Activated B cell treated with CpG ODN at 0.5 μM for 24 hours (primary cell): ENCODE measurements at regions of chr3 and their contacts with region 1.

Region 1: DNA sequence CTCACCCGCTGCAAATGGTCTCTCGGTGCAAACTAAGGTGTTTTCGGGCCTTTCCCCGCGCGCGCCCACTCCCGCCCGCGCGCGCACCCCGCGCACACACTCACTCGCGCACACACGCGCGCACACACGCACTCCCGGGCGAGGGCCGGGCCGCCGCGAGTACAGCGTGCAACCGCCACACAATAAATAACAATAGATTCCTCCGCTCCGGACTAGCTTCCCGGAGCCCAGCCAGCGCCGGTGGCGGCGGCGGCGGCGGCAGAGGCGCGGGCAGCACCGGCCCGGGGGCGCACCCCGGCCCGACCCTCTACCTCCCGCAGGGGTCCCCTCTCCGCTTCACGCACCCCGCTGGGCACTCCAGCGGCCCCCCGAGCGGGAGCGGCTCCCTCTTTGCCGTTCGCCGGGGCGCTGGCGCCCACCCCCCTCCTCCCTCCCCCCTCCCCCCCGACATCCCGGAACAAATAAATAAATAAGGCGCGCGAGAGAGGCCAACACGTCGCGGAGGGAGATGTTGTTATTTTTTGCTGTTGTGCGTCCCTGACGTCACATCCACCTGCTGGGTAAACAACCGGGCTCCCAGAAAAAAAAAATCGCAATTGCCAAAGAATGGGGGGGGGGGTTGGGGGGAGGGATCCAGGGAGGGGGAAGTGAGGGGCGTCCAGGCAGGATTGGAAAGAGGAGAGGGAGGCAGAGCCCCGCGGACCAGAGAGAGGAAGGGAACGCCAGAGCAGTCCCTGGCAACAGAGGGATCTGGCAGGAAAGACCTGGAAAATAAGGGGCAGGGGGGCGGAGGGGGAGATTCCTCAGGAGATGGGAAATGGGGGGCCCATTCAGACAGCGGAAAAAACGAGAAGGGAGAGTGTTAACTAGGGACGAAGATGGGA is at the start of gene FOXP1:
- DNase-seq: peak; percentile 59
- ATAC-seq: peak; percentile 30
- H3K4me3 Mint-ChIP-seq: peak within 1 kb of the TSS; percentile 92
- H3K27ac Mint-ChIP-seq: peak within 1 kb of the TSS; percentile 93
- H3K4me1 Mint-ChIP-seq: peaks cover 53% of the 10 kb centered on the region
- H3K27me3 Mint-ChIP-seq: no peaks in the 10 kb centered on the region
- CTCF ChIP-seq: no peak
- total RNA-seq, gene FOXP1: 491 and 563 TPM in 2 replicates

Region 2: DNA sequence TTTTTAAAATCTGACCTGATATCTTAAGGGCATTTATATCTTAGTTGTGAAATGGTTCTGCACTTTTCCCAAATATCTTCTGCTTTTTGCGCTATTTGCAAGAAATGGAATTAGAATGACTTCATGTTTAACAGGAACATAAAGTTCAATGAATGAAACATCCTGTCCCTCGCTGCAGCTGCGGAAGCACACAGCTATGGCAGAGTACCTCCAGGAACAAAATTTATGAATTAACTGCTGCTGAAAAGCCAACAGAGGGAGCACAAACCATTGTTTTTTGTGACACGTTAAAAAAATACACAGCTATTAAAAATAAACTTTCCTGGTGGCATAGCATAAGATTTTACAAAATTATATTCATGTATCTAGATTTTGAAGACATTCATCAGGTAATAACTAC is 867.0 kb before region 1 on chr3:
- CTCF ChIA-PET with region 1: interaction called, 3 read pairs
- POLR2A ChIA-PET with region 1: no interaction called
- intact Hi-C with region 1: loop called (anchors 2 kb)
- DNase-seq: no peak
- ATAC-seq: no peak
- H3K4me3 Mint-ChIP-seq: no peak overlapping the region
- H3K27ac Mint-ChIP-seq: no peak overlapping the region
- H3K4me1 Mint-ChIP-seq: no peaks in the 10 kb centered on the region
- H3K27me3 Mint-ChIP-seq: peaks cover 11% of the 10 kb centered on the region
- CTCF ChIP-seq: no peak

Region 3: GRCh38 chr3:71069797-71070196 is 514.0 kb before region 1 on chr3:
- CTCF ChIA-PET with region 1: interaction called, 4 read pairs
- POLR2A ChIA-PET with region 1: interaction called, 103 read pairs
- intact Hi-C with region 1: loop called (anchors 2 kb)
- DNase-seq: no peak
- ATAC-seq: peak; percentile 44
- H3K4me3 Mint-ChIP-seq: peak overlapping the region; percentile 36
- H3K27ac Mint-ChIP-seq: peak overlapping the region; percentile 79
- H3K4me1 Mint-ChIP-seq: peaks cover 89% of the 10 kb centered on the region
- H3K27me3 Mint-ChIP-seq: no peaks in the 10 kb centered on the region
- CTCF ChIP-seq: no peak

Region 4: GRCh38 chr3:71305231-71306206 is 278.3 kb before region 1 on chr3:
- CTCF ChIA-PET with region 1: interaction called, 4 read pairs
- POLR2A ChIA-PET with region 1: interaction called, 24 read pairs
- intact Hi-C with region 1: loop called (anchors 1 kb)
- DNase-seq: no peak
- ATAC-seq: peak; percentile 38
- H3K4me3 Mint-ChIP-seq: peak overlapping the region; percentile 92
- H3K27ac Mint-ChIP-seq: peak overlapping the region; percentile 94
- H3K4me1 Mint-ChIP-seq: peaks cover 79% of the 10 kb centered on the region
- H3K27me3 Mint-ChIP-seq: no peaks in the 10 kb centered on the region
- CTCF ChIP-seq: no peak

Region 5: GRCh38 chr3:71423151-71423906 is 160.5 kb before region 1 on chr3:
- CTCF ChIA-PET with region 1: no interaction called
- POLR2A ChIA-PET with region 1: interaction called, 14 read pairs
- intact Hi-C with region 1: no loop called
- DNase-seq: no peak
- ATAC-seq: no peak
- H3K4me3 Mint-ChIP-seq: no peak overlapping the region
- H3K27ac Mint-ChIP-seq: peak overlapping the region; percentile 99
- H3K4me1 Mint-ChIP-seq: peaks cover 91% of the 10 kb centered on the region
- H3K27me3 Mint-ChIP-seq: no peaks in the 10 kb centered on the region
- CTCF ChIP-seq: no peak

Region 6: GRCh38 chr3:71521940-71522876 is 61.6 kb before region 1 on chr3:
- CTCF ChIA-PET with region 1: interaction called, 3 read pairs
- POLR2A ChIA-PET with region 1: interaction called, 8 read pairs
- intact Hi-C with region 1: loop called (anchors 2 kb)
- DNase-seq: no peak
- ATAC-seq: peak; percentile 37
- H3K4me3 Mint-ChIP-seq: no peak overlapping the region
- H3K27ac Mint-ChIP-seq: no peak overlapping the region
- H3K4me1 Mint-ChIP-seq: peaks cover 37% of the 10 kb centered on the region
- H3K27me3 Mint-ChIP-seq: peaks cover 2% of the 10 kb centered on the region
- CTCF ChIP-seq: no peak